Heart left ventricle (tissue), 16 donors: ENCODE measurements at regions of chr11 and their contacts with region 1.

Region 1: DNA sequence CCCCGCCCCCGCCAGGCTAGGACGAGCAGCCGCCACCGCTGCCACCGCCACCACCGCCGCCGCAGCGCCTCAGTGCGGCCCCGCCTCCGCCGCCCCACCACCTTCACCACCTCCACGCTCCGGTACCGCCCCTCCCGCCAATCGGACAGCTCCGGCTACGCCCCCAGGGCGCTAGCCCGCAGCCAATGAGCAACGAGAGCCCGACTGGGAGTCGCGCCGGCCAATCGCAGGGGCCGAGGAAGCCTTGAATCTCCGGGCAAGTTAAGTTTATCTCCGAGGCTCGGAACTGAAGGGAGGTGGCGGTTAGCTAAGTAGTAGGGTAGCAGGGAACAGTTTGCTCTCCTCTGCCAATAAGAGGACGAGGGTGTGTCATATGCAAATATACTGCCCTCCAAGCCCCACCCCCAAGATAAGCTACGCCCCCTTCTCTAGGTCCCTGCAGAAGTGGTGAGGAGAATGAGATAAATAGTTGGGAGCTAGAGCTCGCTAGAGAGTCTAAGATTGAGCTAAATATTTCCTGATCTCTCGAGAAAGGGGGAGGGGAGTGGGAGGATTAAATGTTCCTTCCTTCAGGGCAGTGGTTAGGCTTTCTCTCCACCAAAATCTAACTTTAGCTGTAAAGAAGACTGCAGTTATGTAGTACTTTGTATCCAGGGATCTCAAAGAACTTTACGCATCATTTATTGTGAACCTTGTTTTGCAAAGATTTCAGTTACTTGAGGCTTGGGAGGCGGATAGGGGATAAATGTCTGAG is at the start of gene SESN3:
- DNase-seq: peak; percentile 99
- ATAC-seq: peak; percentile 98 to 99 (median 98)
- H3K4me3 ChIP-seq: peak within 1 kb of the TSS; percentile 78 to 95 (median 88)
- H3K27ac ChIP-seq: peak within 1 kb of the TSS; percentile 36 to 90 (median 81)
- H3K4me1 ChIP-seq: peaks cover 0 to 48% (median 9%) of the 10 kb centered on the region in 12 donors
- H3K27me3 ChIP-seq: no peaks in the 10 kb centered on the region
- CTCF ChIP-seq: peak in 5 of 12 donors; percentile 15 to 43 (median 39)
- POLR2A ChIP-seq: peak in 1 of 2 donors; percentile 78
- total RNA-seq, gene SESN3: 3.1 to 26.5 (median 5.8) TPM

Region 2: DNA sequence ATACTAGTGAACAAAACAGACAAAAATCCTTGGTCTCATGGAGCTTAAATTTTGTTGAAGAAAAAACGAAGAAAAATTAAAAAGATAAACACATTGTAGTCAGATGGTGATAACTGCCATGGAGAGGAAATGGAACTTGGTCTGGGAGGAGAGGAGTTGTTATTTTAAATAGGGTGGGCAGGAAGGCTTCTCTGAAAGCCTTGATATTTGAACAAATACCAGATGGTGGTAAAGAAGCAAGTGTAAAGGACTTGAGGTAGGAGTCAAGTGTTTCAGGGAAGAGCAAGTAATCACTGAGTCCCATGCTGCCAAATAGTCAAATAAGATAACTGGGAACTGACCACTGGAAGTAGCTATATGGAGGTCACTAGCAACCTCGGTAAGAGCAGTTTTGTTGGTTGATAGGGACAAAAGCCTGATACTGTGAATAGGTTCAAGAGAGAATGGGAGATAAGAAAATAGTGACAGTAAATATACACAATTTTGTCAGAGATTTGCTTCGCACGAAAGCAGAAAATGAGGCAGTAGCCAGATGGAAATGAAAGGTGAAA is 55.4 kb before region 1 on chr11:
- intact Hi-C with region 1: loop called in 1 of 10 experiments (anchors 10 kb)
- DNase-seq: no peak
- ATAC-seq: no peak
- H3K4me3 ChIP-seq: no peak overlapping the region
- H3K27ac ChIP-seq: no peak overlapping the region
- H3K4me1 ChIP-seq: no peaks in the 10 kb centered on the region
- H3K27me3 ChIP-seq: no peaks in the 10 kb centered on the region
- CTCF ChIP-seq: no peak
- POLR2A ChIP-seq: no peak

Region 3: GRCh38 chr11:95337175-95337957 is 106.1 kb after region 1 on chr11:
- intact Hi-C with region 1: loop called in 4 of 10 experiments (anchors 5 to 10 kb)
- DNase-seq: peak; percentile 61 to 78 (median 74)
- ATAC-seq: peak; percentile 45 to 85 (median 69)
- H3K4me3 ChIP-seq: peak overlapping the region in 4 of 12 donors; percentile 1 to 23 (median 12)
- H3K27ac ChIP-seq: peak overlapping the region; percentile 68 to 89 (median 80)
- H3K4me1 ChIP-seq: peaks cover 6 to 41% (median 32%) of the 10 kb centered on the region in 12 donors
- H3K27me3 ChIP-seq: no peaks in the 10 kb centered on the region
- CTCF ChIP-seq: no peak
- POLR2A ChIP-seq: no peak